Stomach (tissue), 19 donors: ENCODE measurements at regions of chr11 and their contacts with region 1.

Region 1: DNA sequence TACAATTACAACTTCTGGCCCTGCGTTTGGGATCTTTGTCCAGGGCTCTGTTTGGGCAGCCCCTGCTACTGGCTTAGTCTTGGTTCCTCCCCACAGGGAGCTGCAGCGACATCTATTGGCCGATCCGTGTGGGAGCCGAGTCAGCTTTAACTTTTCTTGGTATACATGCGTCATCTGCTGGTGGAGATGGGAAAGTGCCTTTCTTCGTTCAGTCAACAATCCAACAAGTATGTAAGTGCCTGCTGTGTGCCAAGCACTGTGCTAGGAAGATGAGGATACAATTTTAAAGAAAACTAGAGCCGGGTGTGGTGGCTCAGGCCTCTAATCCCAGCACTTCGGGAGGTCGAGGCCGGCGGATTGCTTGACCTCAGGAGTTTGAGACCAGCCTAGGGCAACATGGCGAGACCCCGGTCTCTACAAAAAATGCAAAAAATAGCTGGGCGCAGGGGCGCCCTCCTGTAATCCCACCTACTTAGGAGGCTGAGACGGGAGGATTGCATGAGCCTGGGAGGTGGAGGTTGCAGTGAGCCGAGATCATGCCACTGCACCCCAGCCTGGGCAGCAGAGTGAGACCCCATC is 8.2 kb downstream of the TPBGL start:
- DNase-seq: peak; percentile 89 to 96
- H3K4me3 ChIP-seq: no peak overlapping the region
- H3K27ac ChIP-seq: no peak overlapping the region
- H3K4me1 ChIP-seq: peaks cover 0 to 9% (median 4%) of the 10 kb centered on the region in 4 donors
- H3K27me3 ChIP-seq: peaks cover 0 to 22% (median 0%) of the 10 kb centered on the region in 3 donors
- CTCF ChIP-seq: peak in 6 of 7 experiments; percentile 31 to 98 (median 94)
- EP300 ChIP-seq: no peak
- POLR2A ChIP-seq: no peak

Region 2: DNA sequence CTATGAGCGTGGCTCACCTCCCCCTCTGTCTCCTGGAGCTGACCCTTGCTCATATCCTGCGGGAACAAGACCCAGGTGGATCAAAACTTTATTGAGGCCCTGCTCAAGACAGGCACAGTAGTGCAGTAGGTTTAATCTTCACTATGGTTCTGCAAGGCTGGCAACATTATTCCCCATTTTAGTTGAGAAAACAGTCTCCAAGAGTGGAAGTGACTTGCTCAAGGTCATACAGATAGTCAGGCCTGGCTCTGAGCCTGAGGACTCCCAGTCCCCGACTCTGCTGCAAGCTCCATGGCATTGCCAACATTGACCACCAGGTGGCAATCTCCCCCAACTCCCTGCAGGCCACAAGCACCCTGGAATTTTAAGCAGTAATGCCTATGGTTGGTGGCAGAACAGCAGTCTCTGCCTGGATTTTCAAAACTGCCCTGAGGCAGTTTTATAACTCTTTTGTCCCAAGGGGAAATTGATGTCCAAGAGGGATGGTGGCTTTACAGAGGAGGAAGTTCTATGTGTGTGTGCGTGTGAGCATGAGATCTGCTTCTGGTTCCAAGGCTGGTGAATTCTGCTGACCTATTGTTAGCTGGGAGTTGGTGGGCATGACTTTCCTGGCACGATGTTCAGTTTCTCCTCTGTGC is 225.9 kb before region 1 on chr11:
- intact Hi-C with region 1: loop called (anchors 5 kb)
- DNase-seq: peak; percentile 87 to 93
- H3K4me3 ChIP-seq: no peak overlapping the region
- H3K27ac ChIP-seq: no peak overlapping the region
- H3K4me1 ChIP-seq: no peaks in the 10 kb centered on the region
- H3K27me3 ChIP-seq: no peaks in the 10 kb centered on the region
- CTCF ChIP-seq: peak in 5 of 7 experiments; percentile 67 to 94 (median 90)
- EP300 ChIP-seq: no peak
- POLR2A ChIP-seq: no peak

Region 3: GRCh38 chr11:75142714-75143419 is 105.9 kb before region 1 on chr11:
- intact Hi-C with region 1: loop called (anchors 5 kb)
- DNase-seq: peak; percentile 44 to 86
- H3K4me3 ChIP-seq: no peak overlapping the region
- H3K27ac ChIP-seq: peak overlapping the region in 1 of 5 donors; percentile 52
- H3K4me1 ChIP-seq: peaks cover 0 to 38% (median 12%) of the 10 kb centered on the region in 4 donors
- H3K27me3 ChIP-seq: no peaks in the 10 kb centered on the region
- CTCF ChIP-seq: no peak
- EP300 ChIP-seq: no peak
- POLR2A ChIP-seq: no peak

Region 4: GRCh38 chr11:75351791-75352587 is 103.2 kb after region 1 on chr11:
- intact Hi-C with region 1: no loop called
- DNase-seq: peak; percentile 67 to 92
- H3K4me3 ChIP-seq: peak overlapping the region; percentile 66 to 92 (median 76)
- H3K27ac ChIP-seq: peak overlapping the region; percentile 95 to 98 (median 97)
- H3K4me1 ChIP-seq: peaks cover 47 to 61% (median 57%) of the 10 kb centered on the region in 4 donors
- H3K27me3 ChIP-seq: no peaks in the 10 kb centered on the region
- CTCF ChIP-seq: peak in 1 of 7 experiments; percentile 12
- EP300 ChIP-seq: no peak
- POLR2A ChIP-seq: no peak

Region 5: GRCh38 chr11:75733431-75734107 is 484.8 kb after region 1 on chr11:
- intact Hi-C with region 1: no loop called
- DNase-seq: peak; percentile 61 to 70
- H3K4me3 ChIP-seq: no peak overlapping the region
- H3K27ac ChIP-seq: peak overlapping the region in 4 of 5 donors; percentile 36 to 79 (median 69)
- H3K4me1 ChIP-seq: peaks cover 5 to 22% (median 12%) of the 10 kb centered on the region in 4 donors
- H3K27me3 ChIP-seq: no peaks in the 10 kb centered on the region
- CTCF ChIP-seq: no peak
- EP300 ChIP-seq: no peak
- POLR2A ChIP-seq: no peak